GM12878 (cell line): ENCODE measurements at regions of chr14 and their contacts with region 1.

Region 1: GRCh38 chr14:45716572-45716971 is 463.6 kb upstream of the MIS18BP1 start:
- DNase-seq: no peak
- ATAC-seq: no peak; the same call in 2 of the 3 replicates
- H3K4me3 ChIP-seq: no peak overlapping the region
- H3K27ac ChIP-seq: no peak overlapping the region
- H3K4me1 ChIP-seq: no peaks in the 10 kb centered on the region
- H3K27me3 ChIP-seq: no peaks in the 10 kb centered on the region
- CTCF ChIP-seq: no peak
- EP300 ChIP-seq: no peak
- POLR2A ChIP-seq: no peak
- RAD21 ChIP-seq: no peak

Region 2: DNA sequence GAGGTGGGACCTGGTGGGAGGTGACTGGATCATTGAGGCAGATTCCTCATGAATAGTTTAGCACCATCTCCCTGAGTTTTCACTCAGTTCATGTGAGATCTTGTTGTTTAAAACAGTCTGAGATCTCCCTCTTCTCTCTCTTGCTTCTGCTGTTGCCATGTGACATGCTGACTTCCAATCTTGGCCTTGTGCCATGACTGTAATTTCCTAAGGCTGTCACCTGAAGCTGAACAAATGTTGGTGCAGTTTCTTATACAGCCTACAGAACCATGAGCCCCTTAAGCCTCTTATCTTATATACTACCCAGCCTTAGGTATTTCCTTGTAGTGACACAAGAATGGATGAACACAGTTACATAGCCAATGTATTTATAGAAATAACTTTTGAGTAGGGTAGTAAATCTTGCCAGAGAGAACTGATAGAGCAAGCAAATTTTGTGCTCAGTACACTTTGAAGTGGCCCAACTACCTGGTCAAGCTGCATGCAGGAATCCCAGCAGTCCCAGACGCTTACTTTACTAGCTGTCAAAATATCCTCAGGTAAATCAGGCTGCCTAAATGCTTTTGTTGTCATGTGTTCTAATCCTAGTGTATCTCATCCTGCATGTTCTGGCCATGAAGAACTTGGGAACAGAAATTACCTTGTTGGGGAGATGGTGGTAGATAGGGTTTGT is 18.0 kb before region 1 on chr14:
- CTCF ChIA-PET with region 1: interaction called, 4 read pairs
- POLR2A ChIA-PET with region 1: interaction called, 4 read pairs
- RAD21 ChIA-PET with region 1: interaction called, 8 read pairs
- SMC1A ChIA-PET with region 1: interaction called, 20 read pairs
- in situ Hi-C with region 1: no loop called
- intact Hi-C with region 1: no loop called
- DNase-seq: no peak
- ATAC-seq: no peak
- H3K4me3 ChIP-seq: no peak overlapping the region
- H3K27ac ChIP-seq: no peak overlapping the region
- H3K4me1 ChIP-seq: no peaks in the 10 kb centered on the region
- H3K27me3 ChIP-seq: no peaks in the 10 kb centered on the region; a peak in 1 of 4 replicates
- CTCF ChIP-seq: no peak
- EP300 ChIP-seq: no peak
- POLR2A ChIP-seq: no peak
- RAD21 ChIP-seq: no peak